Common myeloid progenitor, CD34-positive (primary cell): ENCODE measurements at regions of chr6 and their contacts with region 1.

Region 1: GRCh38 chr6:30130887-30131862 is 4.8 kb upstream of the TRIM40 start:
- DNase-seq: peak; percentile 87 to 92 (median 91)
- H3K4me3 ChIP-seq: peak overlapping the region in 1 of 7 experiments; percentile 14
- H3K27ac ChIP-seq: no peak overlapping the region
- H3K4me1 ChIP-seq: peaks cover 0 to 14% (median 5%) of the 10 kb centered on the region in 4 experiments
- H3K27me3 ChIP-seq: peaks cover 15 to 60% (median 37%) of the 10 kb centered on the region in 5 experiments

Region 2: DNA sequence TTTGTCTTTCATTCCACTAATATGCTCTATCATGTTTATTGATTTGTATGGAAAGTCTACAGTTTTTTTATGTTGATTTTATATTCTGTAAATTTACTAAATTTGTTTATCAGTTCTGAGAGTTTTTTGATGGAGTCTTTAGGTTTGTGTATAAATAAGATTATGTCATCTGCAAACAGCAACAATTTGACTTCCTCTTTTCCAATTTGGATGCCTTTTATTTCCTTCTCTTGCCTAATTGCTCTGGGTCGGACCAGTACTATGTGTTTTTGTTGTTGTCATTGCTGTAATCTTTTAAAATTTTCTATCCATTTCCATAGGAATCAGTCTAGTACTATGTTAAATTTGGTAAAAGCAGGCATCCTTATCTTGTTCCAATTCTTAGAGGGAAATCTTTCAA is 101.6 kb before region 1 on chr6:
- CTCF ChIA-PET with region 1: no interaction called
- POLR2A ChIA-PET with region 1: no interaction called
- DNase-seq: no peak
- H3K4me3 ChIP-seq: no peak overlapping the region
- H3K27ac ChIP-seq: no peak overlapping the region
- H3K4me1 ChIP-seq: no peaks in the 10 kb centered on the region
- H3K27me3 ChIP-seq: no peaks in the 10 kb centered on the region

Region 3: DNA sequence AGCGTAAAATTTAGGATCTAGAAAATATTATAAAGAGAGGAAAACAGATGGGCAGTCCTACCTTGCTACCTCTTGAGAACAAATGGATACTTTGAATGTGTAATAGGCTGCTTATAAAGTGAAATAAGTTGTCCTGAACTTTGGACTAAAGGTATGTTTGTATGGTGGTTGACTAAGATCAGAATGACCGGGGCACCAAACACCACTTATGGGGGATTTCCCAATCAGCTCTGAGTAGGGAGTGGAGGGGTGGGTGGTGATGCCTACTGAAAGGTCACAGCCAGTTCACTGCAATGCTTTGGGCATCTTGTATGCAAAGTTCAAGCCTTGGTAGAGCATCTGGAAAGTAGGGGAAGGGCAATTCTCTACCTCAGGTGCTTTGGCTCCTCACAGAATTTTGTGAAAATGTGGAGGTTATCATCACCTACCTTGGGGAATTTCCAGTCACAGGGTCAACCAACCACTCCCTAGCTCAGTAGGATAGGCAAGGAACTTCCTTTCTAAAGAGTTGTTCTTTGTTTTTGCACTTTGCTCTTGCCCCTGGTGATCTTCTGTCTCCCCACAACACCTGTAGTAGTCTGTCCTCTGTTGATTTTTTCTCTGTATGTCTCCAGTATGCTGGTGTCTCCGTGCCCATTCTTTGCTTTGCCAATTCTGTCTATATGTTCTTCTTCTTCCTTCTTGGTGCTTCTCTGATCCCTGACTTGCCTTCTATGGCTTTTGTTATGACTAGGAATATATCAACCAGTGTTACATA is 18.0 kb before region 1 on chr6 and contains the start of gene TRIM31:
- CTCF ChIA-PET with region 1: interaction called, 25 read pairs
- POLR2A ChIA-PET with region 1: no interaction called
- DNase-seq: no peak
- H3K4me3 ChIP-seq: no peak within 1 kb of the TSS
- H3K27ac ChIP-seq: no peak within 1 kb of the TSS
- H3K4me1 ChIP-seq: no peaks in the 10 kb centered on the region
- H3K27me3 ChIP-seq: peaks cover 13 to 60% (median 28%) of the 10 kb centered on the region in 5 experiments

Region 4: GRCh38 chr6:30149231-30149630 is 18.1 kb after region 1 on chr6:
- CTCF ChIA-PET with region 1: interaction called, 30 read pairs
- POLR2A ChIA-PET with region 1: no interaction called
- DNase-seq: no peak
- H3K4me3 ChIP-seq: no peak overlapping the region
- H3K27ac ChIP-seq: no peak overlapping the region
- H3K4me1 ChIP-seq: peaks cover 0 to 50% (median 34%) of the 10 kb centered on the region in 4 experiments
- H3K27me3 ChIP-seq: peaks cover 0 to 2% (median 0%) of the 10 kb centered on the region in 5 experiments

Region 5: DNA sequence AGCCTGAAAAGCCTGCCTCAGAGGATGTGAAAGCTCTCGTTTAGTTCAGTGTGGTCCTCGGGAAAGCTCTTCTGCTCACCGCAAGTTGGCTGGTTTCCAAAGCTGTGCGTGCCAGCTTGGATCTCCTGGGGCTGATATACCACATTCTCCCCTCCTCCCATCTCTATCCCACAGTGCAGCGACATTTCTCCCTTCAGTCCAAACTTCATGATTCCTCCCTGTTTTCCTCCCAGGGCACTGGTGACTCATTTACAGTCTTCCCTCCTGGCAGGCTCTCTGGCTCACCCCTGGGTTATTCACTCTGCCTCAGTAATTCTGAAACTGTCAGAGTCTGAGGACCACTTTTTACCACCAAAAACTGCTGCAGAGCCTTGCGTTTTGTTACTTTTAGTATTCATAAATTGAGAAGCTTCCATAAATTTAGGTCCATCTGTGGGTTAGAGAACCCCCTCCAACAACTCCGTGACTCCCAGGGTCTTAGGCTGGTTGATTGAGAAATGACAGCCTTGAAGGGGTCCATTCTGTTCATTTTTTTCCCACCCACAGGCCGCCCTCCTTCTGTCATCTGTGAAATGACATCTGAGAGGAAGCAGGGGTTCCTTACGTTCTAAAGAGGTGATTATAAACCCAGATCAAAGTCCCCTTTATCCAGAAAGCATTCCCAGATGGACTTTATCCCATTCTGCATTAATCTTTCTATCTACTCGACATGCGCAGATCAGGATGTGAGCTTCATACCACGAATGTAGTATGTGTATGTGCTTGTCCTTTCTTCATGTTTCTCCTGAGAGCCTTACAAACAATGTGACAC is 23.7 kb after region 1 on chr6:
- CTCF ChIA-PET with region 1: interaction called, 14 read pairs
- POLR2A ChIA-PET with region 1: no interaction called
- DNase-seq: no peak
- H3K4me3 ChIP-seq: no peak overlapping the region
- H3K27ac ChIP-seq: no peak overlapping the region
- H3K4me1 ChIP-seq: peaks cover 0 to 55% (median 35%) of the 10 kb centered on the region in 4 experiments
- H3K27me3 ChIP-seq: no peaks in the 10 kb centered on the region

Region 6: GRCh38 chr6:30169658-30170614 is 38.8 kb after region 1 on chr6:
- CTCF ChIA-PET with region 1: interaction called, 13 read pairs
- POLR2A ChIA-PET with region 1: no interaction called
- DNase-seq: peak; percentile 74 to 87 (median 80)
- H3K4me3 ChIP-seq: no peak overlapping the region
- H3K27ac ChIP-seq: no peak overlapping the region
- H3K4me1 ChIP-seq: peaks cover 3 to 32% (median 24%) of the 10 kb centered on the region in 4 experiments
- H3K27me3 ChIP-seq: peaks cover 3 to 45% (median 22%) of the 10 kb centered on the region in 5 experiments

Region 7: DNA sequence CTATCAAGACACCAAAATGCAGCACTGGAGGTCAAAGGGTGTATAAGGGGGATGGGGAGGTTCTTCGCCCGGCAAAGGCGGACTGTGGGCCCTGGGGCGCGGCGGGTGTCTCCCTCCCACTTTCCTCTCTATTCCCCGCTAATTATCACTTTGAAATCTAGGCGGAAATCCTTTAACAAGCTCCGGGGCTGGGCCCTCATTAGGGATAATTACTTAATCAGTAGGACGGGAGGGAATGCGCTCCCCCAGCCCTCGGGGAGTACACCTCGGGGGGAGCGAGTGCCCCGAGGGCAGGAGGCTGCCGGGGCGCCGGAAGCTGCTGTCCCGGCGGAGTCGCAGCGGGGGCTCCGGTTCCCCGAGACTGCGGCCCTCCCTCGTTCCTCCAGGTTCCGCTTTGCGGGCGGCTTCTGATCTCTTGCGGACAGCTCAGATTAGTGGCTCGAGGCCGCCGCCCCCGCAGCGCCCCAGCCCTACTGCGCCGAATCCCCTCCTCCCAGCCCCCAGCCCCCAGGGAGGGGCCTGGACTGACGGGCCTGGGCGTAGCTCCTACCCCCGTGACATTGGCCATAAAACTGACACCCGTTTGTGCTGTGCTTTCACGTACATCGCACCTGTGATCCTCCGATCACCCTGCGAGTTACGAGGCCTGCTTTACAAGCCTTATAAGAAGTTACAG is 824.3 kb after region 1 on chr6:
- CTCF ChIA-PET with region 1: no interaction called
- POLR2A ChIA-PET with region 1: no interaction called
- DNase-seq: peak; percentile 56 to 90 (median 84)
- H3K4me3 ChIP-seq: peak overlapping the region; percentile 11 to 72 (median 55)
- H3K27ac ChIP-seq: no peak overlapping the region
- H3K4me1 ChIP-seq: peaks cover 2 to 16% (median 14%) of the 10 kb centered on the region in 4 experiments
- H3K27me3 ChIP-seq: peaks cover 11 to 80% (median 33%) of the 10 kb centered on the region in 5 experiments